ENCODE measurements at regions of chr11 and their contacts with region 1.

Region 1: DNA sequence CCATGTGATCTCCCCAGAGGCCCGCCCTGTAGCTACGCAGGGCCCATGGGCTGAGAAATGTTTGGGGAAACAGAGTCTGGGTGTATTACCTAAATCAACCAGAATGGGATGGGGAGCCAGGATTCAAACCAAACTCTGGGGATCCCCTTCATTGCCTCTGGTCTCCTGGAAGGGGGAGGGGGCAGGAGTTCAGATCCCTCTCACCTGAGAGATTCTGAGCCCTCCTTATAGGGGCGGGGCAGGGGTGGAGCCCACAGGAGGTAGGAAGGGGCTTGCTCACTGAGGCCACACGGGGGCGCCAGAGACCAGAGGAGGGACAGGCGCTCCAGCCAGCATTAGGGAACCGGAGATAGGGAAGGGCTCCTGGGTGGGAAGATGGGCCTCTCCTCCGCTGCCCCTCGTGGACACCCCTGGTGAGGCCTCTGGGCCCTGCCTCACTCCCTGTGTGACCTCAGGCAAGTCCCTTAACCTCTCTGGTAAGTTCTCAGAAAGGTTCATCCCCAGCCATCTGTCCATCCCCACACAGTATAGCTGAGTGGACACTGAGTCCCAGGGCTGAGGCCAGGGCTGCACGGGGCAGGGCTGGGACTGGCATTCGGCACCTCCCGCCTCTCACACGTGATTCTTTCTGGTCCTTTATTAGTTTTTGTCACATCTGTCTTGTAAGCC is 2.7 kb upstream of the CDC42BPG start:
- DNase-seq: peak; percentile 93 to 97
- ATAC-seq: peak; percentile 85 to 94 (median 90)
- H3K4me3 ChIP-seq: no peak overlapping the region
- H3K27ac ChIP-seq: no peak overlapping the region
- H3K4me1 ChIP-seq: peaks cover 41% of the 10 kb centered on the region
- H3K27me3 ChIP-seq: peaks cover 0 to 3% (median 2%) of the 10 kb centered on the region in 3 donors
- CTCF ChIP-seq: peak; percentile 98

Region 2: DNA sequence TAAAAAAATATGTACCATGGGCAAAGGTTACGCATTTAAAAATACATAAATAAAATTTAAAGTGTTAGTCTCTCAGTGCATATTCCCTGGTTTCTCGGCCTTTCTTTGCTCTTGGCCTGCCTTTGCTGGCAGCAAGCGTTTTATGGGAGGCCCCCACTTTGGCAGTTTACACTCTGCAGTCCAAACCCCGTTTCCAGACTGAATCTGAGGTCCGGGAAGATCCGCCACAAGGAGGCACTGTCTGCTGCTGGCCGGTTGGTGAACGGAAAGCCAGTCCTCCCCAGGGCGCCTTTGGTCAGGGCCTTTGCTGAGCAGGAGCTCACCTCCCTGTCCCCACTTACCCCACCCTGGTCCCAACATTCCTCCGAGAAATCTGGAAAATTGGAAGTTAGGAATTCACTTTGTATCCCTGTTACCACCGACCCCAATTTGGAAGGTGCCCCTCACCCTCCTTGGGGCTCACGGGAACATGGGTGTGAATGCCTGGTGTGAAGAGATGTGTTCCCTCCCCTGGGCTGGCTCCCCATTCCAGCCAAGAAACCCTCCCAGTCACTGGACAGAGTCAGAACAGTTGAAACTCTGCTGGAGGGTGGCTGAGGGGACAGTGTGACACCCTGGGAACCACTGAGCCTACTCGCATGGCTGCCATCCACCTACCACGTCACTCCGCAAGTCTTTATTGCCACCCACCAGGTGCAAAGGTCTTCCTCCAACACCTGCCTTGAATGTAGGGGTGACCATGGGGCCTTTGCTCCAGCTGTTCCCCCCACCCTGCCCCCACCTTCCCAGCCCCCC is 59.4 kb before region 1 on chr11:
- intact Hi-C with region 1: loop called in 1 of 2 experiments (anchors 5 kb)
- DNase-seq: peak; percentile 63 to 72
- ATAC-seq: peak in 3 of 4 donors; percentile 36 to 77 (median 63)
- H3K4me3 ChIP-seq: no peak overlapping the region
- H3K27ac ChIP-seq: no peak overlapping the region
- H3K4me1 ChIP-seq: no peaks in the 10 kb centered on the region
- H3K27me3 ChIP-seq: no peaks in the 10 kb centered on the region
- CTCF ChIP-seq: peak; percentile 58

Region 3: GRCh38 chr11:64826578-64827450 is 20.3 kb before region 1 on chr11:
- intact Hi-C with region 1: no loop called
- DNase-seq: peak in 1 of 2 donors; percentile 70
- ATAC-seq: peak; percentile 64 to 95 (median 91)
- H3K4me3 ChIP-seq: peak overlapping the region; percentile 38
- H3K27ac ChIP-seq: no peak overlapping the region
- H3K4me1 ChIP-seq: no peaks in the 10 kb centered on the region
- H3K27me3 ChIP-seq: no peaks in the 10 kb centered on the region
- CTCF ChIP-seq: no peak

Region 4: GRCh38 chr11:64884019-64884418 is 36.9 kb after region 1 on chr11:
- intact Hi-C with region 1: loop called in 1 of 2 experiments (anchors 2 kb)
- DNase-seq: no peak
- ATAC-seq: no peak
- H3K4me3 ChIP-seq: no peak overlapping the region
- H3K27ac ChIP-seq: no peak overlapping the region
- H3K4me1 ChIP-seq: peaks cover 13% of the 10 kb centered on the region
- H3K27me3 ChIP-seq: no peaks in the 10 kb centered on the region
- CTCF ChIP-seq: no peak

Region 5: DNA sequence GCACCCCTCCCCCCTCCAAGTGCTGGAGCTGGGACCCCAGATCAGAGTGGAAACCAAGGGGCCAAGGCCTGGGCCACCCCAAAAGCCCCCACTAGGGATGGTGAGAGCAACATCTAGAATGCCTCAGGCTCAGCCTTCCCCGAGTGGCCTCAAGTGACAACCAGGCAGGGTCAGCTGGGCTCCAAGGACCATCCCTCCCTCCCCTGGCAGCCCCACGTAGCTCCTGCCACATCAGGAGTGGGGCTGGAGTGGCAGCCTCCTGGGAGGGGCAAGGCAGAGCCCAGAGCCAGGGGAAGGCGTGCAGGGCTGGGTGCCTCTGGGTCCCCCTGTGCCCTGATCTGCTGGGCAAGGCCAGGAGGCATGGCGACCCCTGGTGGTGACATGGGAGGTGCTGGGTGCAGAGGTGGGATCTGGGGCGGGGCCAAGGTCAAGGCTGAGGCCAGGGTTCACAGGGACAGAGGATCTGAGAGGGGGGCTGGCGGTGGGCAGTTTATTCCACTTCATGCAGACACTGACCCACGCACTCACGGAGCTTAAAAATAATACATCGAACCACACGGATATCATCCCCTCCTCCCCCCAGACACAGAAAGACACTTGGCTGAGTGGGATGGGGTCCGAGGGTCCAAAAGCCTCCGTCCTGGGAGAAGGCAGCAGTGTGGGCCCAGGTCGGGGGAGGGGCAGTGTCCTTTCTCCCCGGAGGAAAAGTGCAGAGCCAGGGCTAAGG is 47.1 kb after region 1 on chr11:
- intact Hi-C with region 1: loop called (anchors 1 to 2 kb)
- DNase-seq: peak; percentile 89 to 94
- ATAC-seq: peak; percentile 87 to 91 (median 90)
- H3K4me3 ChIP-seq: no peak overlapping the region
- H3K27ac ChIP-seq: peak overlapping the region; percentile 44
- H3K4me1 ChIP-seq: no peaks in the 10 kb centered on the region
- H3K27me3 ChIP-seq: no peaks in the 10 kb centered on the region
- CTCF ChIP-seq: peak; percentile 90

Region 6: GRCh38 chr11:65013692-65014145 is 166.6 kb after region 1 on chr11:
- intact Hi-C with region 1: loop called in 1 of 2 experiments (anchors 10 kb)
- DNase-seq: peak; percentile 92 to 96
- ATAC-seq: peak; percentile 90 to 96 (median 92)
- H3K4me3 ChIP-seq: peak overlapping the region; percentile 81
- H3K27ac ChIP-seq: peak overlapping the region; percentile 97
- H3K4me1 ChIP-seq: peaks cover 5% of the 10 kb centered on the region
- H3K27me3 ChIP-seq: no peaks in the 10 kb centered on the region
- CTCF ChIP-seq: no peak

Region 7: GRCh38 chr11:65117216-65118096 is 270.3 kb after region 1 on chr11 and contains the start of gene ZNHIT2:
- intact Hi-C with region 1: loop called in 1 of 2 experiments (anchors 10 kb)
- DNase-seq: peak; percentile 99 to 100
- ATAC-seq: peak; percentile 86 to 88 (median 87)
- H3K4me3 ChIP-seq: peak within 1 kb of the TSS; percentile 79
- H3K27ac ChIP-seq: peak within 1 kb of the TSS; percentile 81
- H3K4me1 ChIP-seq: peaks cover 28% of the 10 kb centered on the region
- H3K27me3 ChIP-seq: no peaks in the 10 kb centered on the region
- CTCF ChIP-seq: peak; percentile 93
- total RNA-seq, gene ZNHIT2: 8.6 to 16.1 (median 10.2) TPM

Measured in psoas muscle (tissue), 8 donors.